CD14-positive monocyte (primary cell): ENCODE measurements at regions of chr19 and their contacts with region 1.

Region 1: GRCh38 chr19:45001087-45001739 is at the start of gene RELB:
- DNase-seq: peak; percentile 87 to 95 (median 94)
- H3K4me3 ChIP-seq: peak within 1 kb of the TSS; percentile 64 to 86 (median 82)
- H3K4me3 Mint-ChIP-seq: peak within 1 kb of the TSS; percentile 92 to 96
- H3K27ac ChIP-seq: peak within 1 kb of the TSS; percentile 99
- H3K27ac Mint-ChIP-seq: peak within 1 kb of the TSS; percentile 98 to 100 (median 100)
- H3K4me1 ChIP-seq: peaks cover 13 to 14% of the 10 kb centered on the region in 2 donors
- H3K4me1 Mint-ChIP-seq: peaks cover 15% of the 10 kb centered on the region
- H3K27me3 ChIP-seq: no peaks in the 10 kb centered on the region
- H3K27me3 Mint-ChIP-seq: peaks cover 0 to 5% (median 1%) of the 10 kb centered on the region in 3 donors
- CTCF ChIP-seq: no peak
- polyA plus RNA-seq, gene RELB: 32.3 to 35.0 (median 34.4) TPM

Region 2: GRCh38 chr19:45038931-45039893 is 38.0 kb after region 1 on chr19 and contains the start of gene CLASRP:
- intact Hi-C with region 1: loop called (anchors 2 to 5 kb)
- DNase-seq: peak; percentile 84 to 89 (median 84)
- H3K4me3 ChIP-seq: peak within 1 kb of the TSS; percentile 53 to 94 (median 82)
- H3K4me3 Mint-ChIP-seq: peak within 1 kb of the TSS; percentile 98 to 99
- H3K27ac ChIP-seq: peak within 1 kb of the TSS; percentile 95 to 98
- H3K27ac Mint-ChIP-seq: peak within 1 kb of the TSS; percentile 97 to 100 (median 98)
- H3K4me1 ChIP-seq: peaks cover 30 to 35% of the 10 kb centered on the region in 2 donors
- H3K4me1 Mint-ChIP-seq: peaks cover 35% of the 10 kb centered on the region
- H3K27me3 ChIP-seq: no peaks in the 10 kb centered on the region
- H3K27me3 Mint-ChIP-seq: peaks cover 0 to 2% (median 0%) of the 10 kb centered on the region in 3 donors
- CTCF ChIP-seq: no peak
- polyA plus RNA-seq, gene CLASRP: 2.2 to 152 (median 4.1) TPM